Cardiac septum (tissue), 1 donor: ENCODE measurements at regions of chr3 and their contacts with region 1.

Region 1: DNA sequence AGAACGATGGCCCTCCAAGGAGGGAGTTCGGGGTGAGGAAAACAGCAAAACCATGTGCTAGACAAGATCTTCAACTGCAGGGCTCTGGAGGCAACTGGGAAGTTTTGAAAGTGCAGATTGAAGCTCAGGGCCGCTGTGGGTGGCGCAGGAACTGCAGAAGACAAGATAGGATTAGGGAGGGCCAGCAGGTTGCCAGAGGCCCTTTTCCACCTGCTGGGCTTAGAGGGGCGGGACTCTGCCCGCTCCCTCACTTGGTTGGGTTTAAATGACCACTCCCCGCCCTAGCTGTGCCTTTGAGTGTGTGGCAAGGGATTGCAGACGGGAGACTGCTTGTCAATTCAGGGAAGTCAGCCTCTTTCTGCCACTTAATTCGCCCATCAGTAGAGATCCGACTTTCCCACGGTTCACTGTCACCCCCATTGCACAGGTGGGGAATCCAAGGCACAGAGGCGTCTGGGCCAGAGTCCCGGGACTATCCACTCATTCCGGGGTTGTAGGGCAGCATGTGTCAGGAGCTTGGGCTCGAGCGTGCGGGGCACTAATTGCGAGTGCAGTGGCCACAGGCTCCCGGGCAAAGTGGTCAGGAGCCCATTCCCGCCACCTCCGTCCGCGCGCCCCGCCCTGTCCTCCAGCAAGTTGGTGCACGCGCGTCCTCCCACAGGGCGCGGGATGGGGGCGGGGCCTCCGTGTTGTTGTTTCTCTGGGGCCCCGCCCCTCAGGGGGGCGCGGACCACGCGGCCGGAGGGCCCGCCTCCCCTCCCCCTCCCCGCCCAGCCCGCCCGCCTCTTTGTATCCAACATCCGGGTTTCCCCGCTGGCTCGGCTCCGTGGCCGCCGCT is at the start of gene ACVR2B:
- DNase-seq: peak; percentile 92
- total RNA-seq, gene ACVR2B: 6.3 TPM

Region 2: DNA sequence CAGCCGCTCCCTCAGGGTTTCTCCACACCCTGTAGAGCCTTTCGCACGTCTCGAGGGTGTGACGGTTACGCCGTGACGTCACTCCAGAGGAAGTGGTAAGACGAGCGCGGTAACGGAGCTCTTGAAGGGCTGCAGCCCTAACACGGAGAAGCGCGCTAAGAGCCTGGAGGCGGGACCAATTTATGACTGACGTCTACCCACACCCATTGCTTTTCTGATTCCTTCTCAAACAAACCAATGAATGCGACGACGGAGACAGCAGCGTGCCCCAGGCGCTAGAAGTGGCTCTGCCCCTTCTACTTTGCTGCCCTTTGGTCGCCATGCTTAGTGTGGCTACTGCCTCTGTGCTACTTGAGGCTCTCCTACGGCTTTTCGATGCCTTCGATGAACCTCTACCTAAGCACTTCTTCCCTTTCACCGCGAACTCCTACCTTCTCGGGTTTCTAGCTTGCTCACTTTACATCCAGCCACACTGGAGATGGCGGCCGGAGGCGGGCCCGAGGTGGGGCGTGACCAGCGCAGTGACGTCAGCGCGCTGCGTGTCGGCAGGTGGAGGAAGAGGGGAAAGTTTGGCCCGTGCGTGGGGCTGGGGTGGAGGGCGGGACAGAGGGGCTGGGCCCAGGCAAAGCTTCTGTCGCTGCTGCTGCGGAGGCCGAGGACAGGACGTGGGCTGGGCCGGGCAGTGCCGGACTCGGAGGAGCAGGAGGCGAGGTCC is 288.2 kb before region 1 on chr3 and contains the start of gene OXSR1:
- intact Hi-C with region 1: loop called (anchors 10 kb)
- DNase-seq: peak; percentile 99
- total RNA-seq, gene OXSR1: 30.6 TPM

Region 3: GRCh38 chr3:38346587-38347410 is 106.5 kb before region 1 on chr3 and contains the start of gene XYLB:
- intact Hi-C with region 1: loop called (anchors 2 kb)
- DNase-seq: peak; percentile 94
- total RNA-seq, gene XYLB: 0.46 TPM

Region 4: GRCh38 chr3:38782148-38782547 is 328.9 kb after region 1 on chr3:
- intact Hi-C with region 1: no loop called
- DNase-seq: no peak

Region 5: GRCh38 chr3:39362192-39362591 is 908.9 kb after region 1 on chr3:
- intact Hi-C with region 1: no loop called
- DNase-seq: no peak